Ascending aorta (tissue), 2 donors: ENCODE measurements at regions of chr13 and their contacts with region 1.

Region 1: DNA sequence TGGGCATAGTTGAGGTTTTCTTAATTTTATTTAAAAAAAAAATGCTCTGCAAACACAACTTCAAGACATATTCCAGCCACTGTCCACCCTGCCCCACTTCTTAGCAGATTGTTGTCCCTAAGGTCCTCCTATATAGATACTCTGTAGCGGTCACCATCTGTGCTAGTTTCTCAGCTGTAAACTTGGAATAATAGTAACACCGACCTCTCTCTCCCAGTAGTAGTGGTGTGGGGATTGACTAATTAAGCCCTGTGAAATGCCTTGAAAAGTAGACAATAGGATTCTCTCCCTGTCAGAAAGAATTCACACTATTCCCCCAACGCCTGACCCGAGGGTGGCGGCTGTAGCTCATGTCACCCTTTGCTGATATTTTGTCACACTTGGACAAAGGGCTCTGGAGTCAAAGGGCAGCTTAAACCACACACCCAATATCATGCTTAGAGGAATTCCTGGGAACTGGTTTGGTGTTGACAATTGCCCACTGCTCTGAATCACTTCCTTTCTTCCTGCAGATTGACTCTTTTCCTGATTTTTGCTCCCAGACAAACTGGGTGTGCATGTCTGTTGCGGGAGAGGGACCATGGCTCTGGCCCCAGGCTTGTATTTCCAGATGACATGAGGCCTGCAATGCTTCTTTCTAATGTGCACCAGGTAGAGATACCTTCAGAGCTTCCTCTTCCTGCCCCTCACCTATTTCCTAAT is 9.1 kb upstream of the SERP2 start:
- DNase-seq: no peak
- H3K4me3 ChIP-seq: no peak overlapping the region
- H3K27ac ChIP-seq: no peak overlapping the region
- H3K4me1 ChIP-seq: peaks cover 0 to 8% of the 10 kb centered on the region in 2 donors
- H3K27me3 ChIP-seq: no peaks in the 10 kb centered on the region
- CTCF ChIP-seq: no peak

Region 2: GRCh38 chr13:44259045-44260027 is 105.2 kb before region 1 on chr13:
- intact Hi-C with region 1: no loop called
- DNase-seq: peak; percentile 55 to 84
- H3K4me3 ChIP-seq: no peak overlapping the region
- H3K27ac ChIP-seq: peak overlapping the region in 1 of 2 donors; percentile 13
- H3K4me1 ChIP-seq: no peaks in the 10 kb centered on the region
- H3K27me3 ChIP-seq: no peaks in the 10 kb centered on the region
- CTCF ChIP-seq: no peak

Region 3: DNA sequence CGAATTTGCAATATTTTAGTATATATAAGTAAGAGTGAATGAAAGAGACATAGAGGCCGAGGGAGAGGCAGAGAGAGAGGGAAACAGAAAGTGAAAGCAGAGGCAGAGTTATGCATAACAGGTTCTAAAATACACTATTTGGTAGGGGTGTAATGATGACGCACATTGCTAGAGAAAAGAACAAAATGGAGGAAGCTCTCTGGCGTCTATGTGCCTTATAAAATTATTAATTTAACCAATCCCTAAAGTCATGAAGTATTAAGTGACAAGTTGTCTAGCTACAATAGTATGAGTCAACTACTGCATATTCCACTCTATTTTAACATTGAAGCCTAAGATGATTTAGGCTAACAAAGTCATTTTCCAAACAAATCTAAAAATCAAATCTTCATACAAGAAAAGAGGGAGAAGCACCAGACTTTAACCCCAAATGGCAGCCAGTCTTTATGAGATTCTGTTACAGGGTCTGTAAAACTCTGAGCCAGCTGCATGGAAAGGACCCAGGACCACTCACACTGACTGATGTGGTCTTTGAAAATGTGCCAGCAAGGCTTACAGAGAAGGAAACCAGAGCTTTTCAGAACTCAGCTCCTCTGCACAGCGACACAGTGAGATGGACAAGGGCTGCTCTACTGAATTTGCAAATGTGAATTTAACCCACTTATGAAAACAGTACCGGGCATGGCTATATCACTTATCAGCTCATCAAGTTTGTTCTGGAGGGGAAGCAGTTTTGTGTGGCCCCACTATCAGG is 89.9 kb before region 1 on chr13:
- intact Hi-C with region 1: loop called (anchors 1 kb)
- DNase-seq: no peak
- H3K4me3 ChIP-seq: peak overlapping the region; percentile 44 to 55
- H3K27ac ChIP-seq: peak overlapping the region; percentile 88 to 92
- H3K4me1 ChIP-seq: peaks cover 9 to 45% of the 10 kb centered on the region in 2 donors
- H3K27me3 ChIP-seq: no peaks in the 10 kb centered on the region
- CTCF ChIP-seq: no peak

Region 4: GRCh38 chr13:44306401-44307192 is 57.9 kb before region 1 on chr13:
- intact Hi-C with region 1: loop called (anchors 5 kb)
- DNase-seq: peak; percentile 38 to 90
- H3K4me3 ChIP-seq: no peak overlapping the region
- H3K27ac ChIP-seq: peak overlapping the region; percentile 88 to 90
- H3K4me1 ChIP-seq: peaks cover 35 to 62% of the 10 kb centered on the region in 2 donors
- H3K27me3 ChIP-seq: no peaks in the 10 kb centered on the region
- CTCF ChIP-seq: no peak